ENCODE measurements at regions of chr3 and their contacts with region 1.

Region 1: DNA sequence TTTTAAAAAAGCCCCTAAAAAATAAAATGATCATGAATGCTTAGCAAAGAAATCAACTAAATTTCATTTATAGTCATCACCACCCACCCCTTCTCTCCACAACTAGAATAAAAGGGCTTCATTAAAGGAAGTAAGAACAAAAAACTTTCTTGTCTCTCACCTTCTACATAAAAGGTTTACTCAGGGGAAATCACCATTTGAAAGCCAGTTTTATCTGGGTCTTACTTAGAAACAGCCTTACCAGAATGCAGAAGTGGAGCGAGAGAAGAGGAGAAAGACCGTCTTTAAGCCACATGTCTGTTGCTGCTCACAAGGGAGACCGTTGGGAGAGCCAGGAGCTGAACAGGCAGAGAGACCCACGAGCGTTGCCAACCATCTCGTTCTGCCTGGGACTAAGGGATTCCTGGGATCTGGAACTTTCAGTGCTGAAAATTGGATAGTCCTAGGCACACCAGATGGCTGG is 350.1 kb upstream of the PROK2 start:
- DNase-seq: peak; percentile 18
- H3K4me3 Mint-ChIP-seq: peak overlapping the region; percentile 49
- H3K27ac Mint-ChIP-seq: peak overlapping the region; percentile 78
- H3K4me1 Mint-ChIP-seq: peaks cover 47% of the 10 kb centered on the region
- H3K27me3 Mint-ChIP-seq: peaks cover 4% of the 10 kb centered on the region

Region 2: DNA sequence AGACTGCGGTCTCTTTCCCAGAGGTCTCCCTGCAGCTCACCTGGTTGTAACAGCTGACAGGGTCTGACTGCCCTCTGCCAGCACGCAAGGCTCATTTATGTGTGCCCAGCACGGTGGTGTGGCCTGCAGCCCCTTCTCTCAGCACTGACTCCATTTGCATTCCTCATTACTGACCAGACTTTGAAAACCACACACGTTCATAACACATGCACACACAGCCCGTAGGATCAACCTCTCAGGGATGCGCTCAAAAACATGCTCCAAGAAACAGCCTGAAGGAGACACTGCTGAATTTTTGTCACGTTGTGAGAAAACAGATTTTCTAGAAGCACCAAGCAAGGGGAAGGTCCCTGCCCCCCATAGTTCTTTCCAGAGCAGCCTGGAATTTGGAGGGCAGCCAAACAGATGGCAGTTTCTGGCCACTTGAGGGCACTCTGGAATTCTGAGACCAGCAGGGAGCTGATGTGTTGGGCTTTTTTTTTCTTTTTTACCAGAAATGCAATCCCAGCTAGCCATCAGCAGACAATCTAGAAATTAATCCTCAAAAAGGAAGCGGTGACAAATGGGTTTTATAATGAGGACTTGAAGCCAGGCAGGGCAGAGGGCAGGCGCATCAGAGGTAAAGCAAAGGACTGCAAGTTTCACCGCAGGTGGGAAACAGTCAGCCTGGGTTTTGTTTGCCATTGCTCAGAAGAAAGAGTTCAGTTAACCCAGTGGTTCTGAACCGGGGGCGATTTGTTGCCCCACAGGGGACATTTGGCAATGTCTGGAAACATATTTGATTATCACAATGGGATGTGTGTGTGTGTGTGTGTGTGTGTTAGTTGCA is 179.6 kb before region 1 on chr3:
- CTCF ChIA-PET with region 1: interaction called, 3 read pairs
- intact Hi-C with region 1: loop called (anchors 1 kb)
- DNase-seq: peak; percentile 76
- H3K4me3 Mint-ChIP-seq: no peak overlapping the region
- H3K27ac Mint-ChIP-seq: peak overlapping the region; percentile 1
- H3K4me1 Mint-ChIP-seq: peaks cover 27% of the 10 kb centered on the region
- H3K27me3 Mint-ChIP-seq: no peaks in the 10 kb centered on the region

Region 3: DNA sequence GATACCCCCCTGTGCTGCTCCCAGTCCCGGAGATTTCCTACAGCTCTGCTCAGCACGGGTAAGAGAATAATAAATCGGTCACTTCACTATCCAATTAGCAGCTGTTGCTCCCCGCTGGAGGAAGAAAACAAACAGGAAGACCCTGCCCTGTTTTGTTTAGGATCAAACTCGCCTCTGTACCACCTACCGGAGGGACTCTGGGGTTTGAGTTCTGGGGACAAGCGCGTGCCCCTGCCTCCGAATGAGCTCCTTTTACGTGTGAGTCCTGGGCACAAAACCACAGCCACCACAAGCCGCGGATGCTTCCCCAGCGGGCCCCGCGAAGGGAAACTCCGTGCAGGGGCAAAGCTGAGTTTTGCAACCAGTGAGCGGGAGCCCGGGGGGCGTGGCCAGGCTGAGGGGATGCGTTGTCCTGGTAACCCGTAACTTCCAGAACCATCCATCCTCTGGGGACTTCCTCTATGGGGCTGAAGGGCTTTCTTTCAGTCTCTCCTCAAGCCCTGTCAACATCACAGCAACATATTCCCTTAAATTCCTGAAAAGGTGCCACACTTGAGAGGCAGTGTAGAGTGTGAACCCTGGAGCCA is 34.3 kb before region 1 on chr3:
- CTCF ChIA-PET with region 1: interaction called, 3 read pairs
- intact Hi-C with region 1: loop called (anchors 1 kb)
- DNase-seq: peak; percentile 99
- H3K4me3 Mint-ChIP-seq: peak overlapping the region; percentile 79
- H3K27ac Mint-ChIP-seq: peak overlapping the region; percentile 89
- H3K4me1 Mint-ChIP-seq: peaks cover 26% of the 10 kb centered on the region
- H3K27me3 Mint-ChIP-seq: peaks cover 7% of the 10 kb centered on the region

Region 4: GRCh38 chr3:72375237-72376076 is 240.4 kb after region 1 on chr3:
- CTCF ChIA-PET with region 1: no interaction called
- intact Hi-C with region 1: loop called (anchors 1 kb)
- DNase-seq: peak; percentile 70
- H3K4me3 Mint-ChIP-seq: peak overlapping the region; percentile 20
- H3K27ac Mint-ChIP-seq: peak overlapping the region; percentile 82
- H3K4me1 Mint-ChIP-seq: peaks cover 62% of the 10 kb centered on the region
- H3K27me3 Mint-ChIP-seq: no peaks in the 10 kb centered on the region

Region 5: DNA sequence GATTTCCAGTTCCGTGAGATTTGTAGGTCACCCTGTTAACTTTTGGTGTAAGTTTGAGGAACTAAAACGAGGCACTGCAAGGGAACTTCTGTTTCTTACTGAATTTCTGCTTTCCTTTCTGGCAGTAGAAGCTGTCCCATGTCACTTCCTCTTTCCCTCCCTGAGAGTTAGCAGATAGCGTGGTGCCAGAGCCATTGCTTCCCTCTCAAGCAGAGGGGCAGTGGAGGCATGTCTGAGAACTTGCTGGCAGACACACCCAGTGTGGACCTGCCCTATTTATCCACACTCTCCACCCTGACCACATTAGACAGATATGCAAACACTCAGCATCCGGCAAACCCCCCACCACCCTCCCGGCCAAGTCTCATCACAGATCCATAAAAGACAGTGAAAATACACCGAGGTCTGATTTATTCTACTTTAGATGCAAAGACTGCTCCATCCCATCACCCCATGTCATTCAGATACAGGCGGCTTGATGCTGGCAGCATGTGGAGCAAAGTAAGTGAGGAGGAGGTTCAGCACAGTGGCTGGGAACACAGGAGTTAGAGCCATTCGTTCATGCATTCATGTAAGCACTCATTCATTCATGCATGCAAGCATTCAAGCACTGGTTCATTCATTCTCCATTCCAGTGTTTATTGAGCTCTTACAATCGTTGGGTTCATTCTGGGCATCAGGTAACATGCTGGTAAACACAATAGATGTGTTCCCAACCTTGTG is 388.6 kb after region 1 on chr3:
- CTCF ChIA-PET with region 1: no interaction called
- intact Hi-C with region 1: loop called (anchors 1 kb)
- DNase-seq: peak; percentile 30
- H3K4me3 Mint-ChIP-seq: no peak overlapping the region
- H3K27ac Mint-ChIP-seq: no peak overlapping the region
- H3K4me1 Mint-ChIP-seq: peaks cover 44% of the 10 kb centered on the region
- H3K27me3 Mint-ChIP-seq: peaks cover 2% of the 10 kb centered on the region